ENCODE measurements at regions of chr19 and their contacts with region 1.

Region 1: DNA sequence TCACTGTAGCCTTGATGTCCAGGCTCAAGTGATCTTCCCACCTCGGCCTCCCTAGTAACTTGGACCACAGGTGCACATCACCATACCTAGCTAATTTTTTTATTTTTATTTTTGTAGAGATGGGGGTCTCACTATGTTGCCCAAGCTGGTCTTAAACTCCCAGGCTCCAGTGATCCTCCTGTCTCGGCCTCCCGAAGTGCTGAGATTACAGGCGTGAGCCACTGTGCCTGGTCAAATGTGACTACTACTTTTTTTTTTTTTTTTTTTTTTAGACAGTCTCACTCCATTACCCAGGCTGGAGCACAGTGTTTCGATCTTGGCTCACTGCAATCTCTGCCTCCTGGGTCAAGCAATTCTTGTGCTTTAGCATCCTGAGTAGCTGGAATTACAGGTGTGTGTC is 20.6 kb upstream of the COX7A1 start:
- DNase-seq: no peak
- H3K4me3 ChIP-seq: no peak overlapping the region
- H3K27ac ChIP-seq: no peak overlapping the region
- H3K4me1 ChIP-seq: no peaks in the 10 kb centered on the region
- H3K27me3 ChIP-seq: no peaks in the 10 kb centered on the region
- CTCF ChIP-seq: no peak
- POLR2A ChIP-seq: no peak

Region 2: GRCh38 chr19:36128392-36128736 is 44.5 kb before region 1 on chr19:
- intact Hi-C with region 1: loop called (anchors 5 kb)
- DNase-seq: no peak
- H3K4me3 ChIP-seq: peak overlapping the region; percentile 55 to 58
- H3K27ac ChIP-seq: peak overlapping the region; percentile 75 to 89
- H3K4me1 ChIP-seq: peaks cover 4% of the 10 kb centered on the region
- H3K27me3 ChIP-seq: no peaks in the 10 kb centered on the region
- CTCF ChIP-seq: no peak
- POLR2A ChIP-seq: no peak

Measured in testis (tissue), 5 donors.